Activated T-helper 1 cell treated with anti-CD3 and anti-CD28 coated beads, Interleukin-12 subunit alpha, Interleukin-12 subunit beta, Interleukin-2, Interleukin-4 antibody, amounts not matched to agents 30 ng/mL and 10 ng/mL and 1 ng/mL, durations not matched to agents 14 hours and 24 hours and 36 hours (primary cell): ENCODE measurements at regions of chr6 and their contacts with region 1.

Region 1: GRCh38 chr6:13711733-13712598 is at the start of gene RANBP9:
- DNase-seq: peak; percentile 86
- H3K4me3 Mint-ChIP-seq: peak within 1 kb of the TSS; percentile 93
- H3K27ac Mint-ChIP-seq: peak within 1 kb of the TSS; percentile 96
- H3K4me1 Mint-ChIP-seq: peaks cover 63% of the 10 kb centered on the region
- H3K27me3 Mint-ChIP-seq: no peaks in the 10 kb centered on the region
- total RNA-seq, gene RANBP9: 58.4 and 60.1 TPM in 2 replicates

Region 2: DNA sequence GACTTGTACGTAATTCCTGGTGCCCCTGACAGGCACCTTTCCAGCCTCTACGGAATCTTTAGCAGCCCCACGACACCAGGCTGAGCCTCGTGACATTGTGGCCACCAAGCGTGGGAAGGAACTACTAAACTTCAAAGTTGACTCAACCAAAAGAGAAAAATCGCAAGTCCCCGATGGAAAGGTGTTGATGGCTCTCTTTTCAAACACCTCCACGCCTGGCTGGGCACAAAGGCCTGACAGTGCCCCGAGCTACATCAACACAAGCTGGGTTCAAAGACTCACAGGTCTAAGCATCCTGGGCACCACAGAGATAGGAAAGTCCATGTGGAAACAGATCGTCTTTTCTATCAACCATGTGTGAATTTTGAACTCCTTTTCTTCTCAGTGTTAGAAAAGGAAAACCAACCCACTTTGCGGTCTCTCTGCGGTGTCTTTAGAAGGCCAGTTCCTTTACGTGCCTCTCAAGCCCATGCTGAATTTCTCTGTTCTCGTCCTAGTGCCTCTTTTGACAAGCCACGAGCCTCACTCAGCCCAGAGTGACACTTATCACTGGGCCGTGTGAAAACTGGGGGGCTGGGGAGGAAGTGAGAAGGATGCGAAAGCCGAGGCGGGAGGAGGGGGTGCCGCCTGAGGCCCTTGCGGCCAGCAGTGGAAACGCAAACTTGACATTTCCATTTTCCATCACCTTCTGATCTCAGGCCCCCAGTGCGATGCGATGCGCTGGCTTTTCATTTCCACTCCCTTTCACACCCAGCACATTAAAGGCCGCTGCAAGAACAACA is 284.0 kb before region 1 on chr6:
- intact Hi-C with region 1: no loop called
- DNase-seq: peak; percentile 57
- H3K4me3 Mint-ChIP-seq: peak overlapping the region; percentile 54
- H3K27ac Mint-ChIP-seq: peak overlapping the region; percentile 95
- H3K4me1 Mint-ChIP-seq: peaks cover 78% of the 10 kb centered on the region
- H3K27me3 Mint-ChIP-seq: no peaks in the 10 kb centered on the region

Region 3: GRCh38 chr6:13454286-13455221 is 257.4 kb before region 1 on chr6:
- intact Hi-C with region 1: loop called (anchors 10 kb)
- DNase-seq: peak; percentile 55
- H3K4me3 Mint-ChIP-seq: peak overlapping the region; percentile 27
- H3K27ac Mint-ChIP-seq: peak overlapping the region; percentile 88
- H3K4me1 Mint-ChIP-seq: peaks cover 55% of the 10 kb centered on the region
- H3K27me3 Mint-ChIP-seq: peaks cover 1% of the 10 kb centered on the region

Region 4: GRCh38 chr6:13614926-13615798 is 96.8 kb before region 1 on chr6 and contains the start of gene NOL7:
- intact Hi-C with region 1: loop called (anchors 1 kb)
- DNase-seq: peak; percentile 98
- H3K4me3 Mint-ChIP-seq: peak within 1 kb of the TSS; percentile 99
- H3K27ac Mint-ChIP-seq: peak within 1 kb of the TSS; percentile 87
- H3K4me1 Mint-ChIP-seq: peaks cover 54% of the 10 kb centered on the region
- H3K27me3 Mint-ChIP-seq: no peaks in the 10 kb centered on the region
- total RNA-seq, gene NOL7: 97.7 and 100 TPM in 2 replicates

Region 5: GRCh38 chr6:13668291-13668928 is 43.6 kb before region 1 on chr6:
- intact Hi-C with region 1: loop called (anchors 2 kb)
- DNase-seq: no peak
- H3K4me3 Mint-ChIP-seq: no peak overlapping the region
- H3K27ac Mint-ChIP-seq: peak overlapping the region; percentile 77
- H3K4me1 Mint-ChIP-seq: peaks cover 83% of the 10 kb centered on the region
- H3K27me3 Mint-ChIP-seq: no peaks in the 10 kb centered on the region

Region 6: GRCh38 chr6:13725570-13725969 is 13.6 kb after region 1 on chr6:
- intact Hi-C with region 1: loop called (anchors 1 kb)
- DNase-seq: no peak
- H3K4me3 Mint-ChIP-seq: peak overlapping the region; percentile 28
- H3K27ac Mint-ChIP-seq: peak overlapping the region; percentile 67
- H3K4me1 Mint-ChIP-seq: peaks cover 31% of the 10 kb centered on the region
- H3K27me3 Mint-ChIP-seq: no peaks in the 10 kb centered on the region

Region 7: DNA sequence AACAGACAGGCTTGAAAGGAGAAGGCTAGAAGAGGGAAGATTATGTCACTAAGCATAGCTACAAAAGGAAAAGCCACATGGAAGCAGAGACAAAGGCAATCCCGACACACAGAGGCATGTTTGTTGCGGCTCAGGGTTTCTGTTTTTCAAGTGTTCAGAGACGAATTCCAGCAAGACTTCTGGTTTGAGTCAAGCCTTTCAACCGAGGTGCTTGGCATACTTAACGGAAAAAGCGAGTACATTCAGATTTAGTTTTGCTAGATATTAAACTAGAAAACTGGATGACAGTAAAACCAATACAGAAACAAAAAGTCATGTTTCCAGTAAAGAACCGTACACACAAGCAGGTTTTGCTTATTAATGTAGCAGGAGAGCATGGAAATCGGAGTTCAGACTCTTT is 75.2 kb after region 1 on chr6:
- intact Hi-C with region 1: loop called (anchors 1 kb)
- DNase-seq: no peak
- H3K4me3 Mint-ChIP-seq: peak overlapping the region; percentile 41
- H3K27ac Mint-ChIP-seq: peak overlapping the region; percentile 82
- H3K4me1 Mint-ChIP-seq: peaks cover 33% of the 10 kb centered on the region
- H3K27me3 Mint-ChIP-seq: no peaks in the 10 kb centered on the region

Region 8: GRCh38 chr6:13814176-13814937 is 102.4 kb after region 1 on chr6 and contains the start of gene MCUR1:
- intact Hi-C with region 1: loop called (anchors 1 kb)
- DNase-seq: peak; percentile 80
- H3K4me3 Mint-ChIP-seq: peak within 1 kb of the TSS; percentile 85
- H3K27ac Mint-ChIP-seq: peak within 1 kb of the TSS; percentile 52
- H3K4me1 Mint-ChIP-seq: peaks cover 38% of the 10 kb centered on the region
- H3K27me3 Mint-ChIP-seq: peaks cover 2% of the 10 kb centered on the region
- total RNA-seq, gene MCUR1: 37.8 and 40.2 TPM in 2 replicates